PC-3 (cell line): ENCODE measurements at regions of chr4 and their contacts with region 1.

Region 1: DNA sequence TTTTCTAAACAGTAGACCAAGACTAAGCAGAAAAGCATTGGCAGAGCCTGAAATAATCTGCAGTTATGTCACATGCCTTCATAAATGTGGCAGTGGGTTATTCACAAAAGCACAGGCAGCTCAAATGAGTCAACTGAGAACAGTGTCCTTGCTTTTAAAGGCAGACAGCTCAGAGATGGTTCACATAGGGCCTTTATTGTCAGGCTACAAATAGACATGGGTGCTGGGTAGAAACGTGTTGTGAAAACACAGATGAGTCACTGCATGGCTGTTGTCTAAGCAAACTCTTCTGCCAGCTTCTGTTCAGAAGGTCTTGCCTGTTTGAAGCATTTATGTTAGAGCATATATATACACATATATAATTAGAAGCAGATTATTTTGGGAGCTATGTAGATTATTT is 118.0 kb downstream of the SLC4A4 start:
- DNase-seq: peak; percentile 92
- ATAC-seq: peak; percentile 100
- H3K4me3 ChIP-seq: no peak overlapping the region
- H3K27ac ChIP-seq: peak overlapping the region; percentile 53
- H3K4me1 ChIP-seq: peaks cover 14% of the 10 kb centered on the region
- H3K27me3 ChIP-seq: no peaks in the 10 kb centered on the region
- CTCF ChIP-seq: no peak

Region 2: DNA sequence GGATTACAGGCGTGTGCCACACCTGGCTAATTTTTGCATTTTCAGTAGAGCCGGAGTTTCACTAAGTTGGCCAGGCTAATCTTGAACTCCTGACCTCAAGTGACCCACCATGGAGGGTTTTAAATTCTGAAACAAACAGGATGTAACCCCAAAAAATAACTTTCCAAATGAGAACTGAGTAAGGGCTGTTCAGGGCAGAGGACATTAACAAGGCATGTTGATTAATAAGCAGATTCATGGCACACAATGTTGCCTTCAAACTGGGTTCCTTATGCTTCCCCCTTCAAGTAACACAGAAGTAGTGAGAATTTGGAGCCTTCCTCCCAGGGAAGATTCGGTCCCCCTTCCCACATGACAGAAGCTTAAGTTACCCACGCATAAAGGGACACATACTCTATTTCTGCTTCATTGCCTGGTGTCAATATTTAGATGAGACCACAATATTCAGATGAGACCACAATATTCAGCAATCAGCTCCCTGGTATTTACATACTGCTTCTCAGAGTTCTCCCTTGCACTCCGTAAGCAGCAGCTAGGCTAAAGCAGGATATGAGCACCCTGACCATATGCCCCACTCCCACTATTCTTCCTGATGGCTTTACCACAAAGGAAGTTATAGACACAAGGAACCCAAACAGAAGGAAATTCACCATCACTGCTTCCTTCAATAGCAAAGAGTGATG is 638.5 kb before region 1 on chr4:
- CTCF ChIA-PET with region 1: no interaction called
- POLR2A ChIA-PET with region 1: no interaction called
- intact Hi-C with region 1: no loop called
- DNase-seq: no peak
- ATAC-seq: no peak
- H3K4me3 ChIP-seq: no peak overlapping the region
- H3K27ac ChIP-seq: no peak overlapping the region
- H3K4me1 ChIP-seq: no peaks in the 10 kb centered on the region
- H3K27me3 ChIP-seq: no peaks in the 10 kb centered on the region
- CTCF ChIP-seq: no peak

Region 3: DNA sequence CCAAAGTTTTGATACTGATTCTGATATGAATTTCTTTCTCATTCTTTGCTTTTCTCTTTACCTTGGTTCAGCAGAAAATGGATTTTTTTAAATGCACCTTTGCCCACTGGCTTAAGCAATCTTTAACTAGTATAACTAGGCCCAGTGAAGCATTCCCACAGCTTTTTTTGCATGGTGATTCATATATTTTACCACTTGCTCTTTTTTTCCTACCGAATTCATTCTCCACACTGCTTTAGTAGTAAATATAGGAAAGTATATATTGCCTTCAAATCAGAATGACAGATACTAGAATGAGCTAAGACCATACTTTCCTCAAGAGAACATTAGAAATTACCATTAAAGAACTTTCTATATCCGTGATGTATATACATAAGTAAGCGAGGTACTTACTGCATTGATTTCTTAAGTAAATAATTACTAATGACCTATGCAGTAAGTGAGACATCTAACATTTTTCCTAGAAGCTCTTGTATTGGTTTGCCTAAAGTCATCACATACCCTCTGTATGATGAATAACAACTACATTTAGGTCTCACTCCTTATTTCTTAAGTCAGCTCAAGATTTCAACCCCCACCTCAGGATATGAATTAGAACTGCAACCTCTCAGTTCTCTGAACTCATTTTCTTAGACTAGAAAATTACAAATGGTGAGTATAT is 73.8 kb before region 1 on chr4:
- CTCF ChIA-PET with region 1: no interaction called
- POLR2A ChIA-PET with region 1: no interaction called
- intact Hi-C with region 1: loop called (anchors 1 kb)
- DNase-seq: peak; percentile 63
- ATAC-seq: peak; percentile 80
- H3K4me3 ChIP-seq: no peak overlapping the region
- H3K27ac ChIP-seq: peak overlapping the region; percentile 51
- H3K4me1 ChIP-seq: peaks cover 29% of the 10 kb centered on the region
- H3K27me3 ChIP-seq: no peaks in the 10 kb centered on the region
- CTCF ChIP-seq: no peak

Region 4: GRCh38 chr4:71498002-71498401 is 41.2 kb after region 1 on chr4:
- CTCF ChIA-PET with region 1: no interaction called
- POLR2A ChIA-PET with region 1: no interaction called
- intact Hi-C with region 1: loop called (anchors 2 kb)
- DNase-seq: peak; percentile 78
- ATAC-seq: peak; percentile 95
- H3K4me3 ChIP-seq: no peak overlapping the region
- H3K27ac ChIP-seq: peak overlapping the region; percentile 11
- H3K4me1 ChIP-seq: peaks cover 17% of the 10 kb centered on the region
- H3K27me3 ChIP-seq: no peaks in the 10 kb centered on the region
- CTCF ChIP-seq: no peak

Region 5: DNA sequence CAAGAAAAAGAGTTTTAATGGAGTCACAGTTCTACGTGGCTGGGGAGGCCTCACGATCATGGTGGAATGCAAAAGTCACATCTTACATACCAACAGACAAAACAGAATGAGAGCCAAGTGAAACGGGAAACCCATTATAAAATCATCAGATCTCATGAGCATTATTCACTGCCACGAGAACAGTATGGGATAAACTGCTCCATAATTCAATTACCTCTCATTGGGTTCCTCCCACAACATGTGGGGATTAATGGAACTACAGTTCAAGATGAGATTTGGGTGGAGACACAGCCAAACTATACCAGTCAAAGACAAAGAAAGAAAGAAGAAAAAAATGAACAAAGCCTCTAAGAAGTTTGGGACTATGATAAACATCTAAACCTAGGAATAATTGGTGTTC is 168.2 kb after region 1 on chr4:
- CTCF ChIA-PET with region 1: no interaction called
- POLR2A ChIA-PET with region 1: no interaction called
- intact Hi-C with region 1: no loop called
- DNase-seq: no peak
- ATAC-seq: no peak
- H3K4me3 ChIP-seq: no peak overlapping the region
- H3K27ac ChIP-seq: no peak overlapping the region
- H3K4me1 ChIP-seq: no peaks in the 10 kb centered on the region
- H3K27me3 ChIP-seq: no peaks in the 10 kb centered on the region
- CTCF ChIP-seq: no peak